Dorsolateral prefrontal cortex (tissue), 120 donors: ENCODE measurements at regions of chr16 and their contacts with region 1.

Region 1: DNA sequence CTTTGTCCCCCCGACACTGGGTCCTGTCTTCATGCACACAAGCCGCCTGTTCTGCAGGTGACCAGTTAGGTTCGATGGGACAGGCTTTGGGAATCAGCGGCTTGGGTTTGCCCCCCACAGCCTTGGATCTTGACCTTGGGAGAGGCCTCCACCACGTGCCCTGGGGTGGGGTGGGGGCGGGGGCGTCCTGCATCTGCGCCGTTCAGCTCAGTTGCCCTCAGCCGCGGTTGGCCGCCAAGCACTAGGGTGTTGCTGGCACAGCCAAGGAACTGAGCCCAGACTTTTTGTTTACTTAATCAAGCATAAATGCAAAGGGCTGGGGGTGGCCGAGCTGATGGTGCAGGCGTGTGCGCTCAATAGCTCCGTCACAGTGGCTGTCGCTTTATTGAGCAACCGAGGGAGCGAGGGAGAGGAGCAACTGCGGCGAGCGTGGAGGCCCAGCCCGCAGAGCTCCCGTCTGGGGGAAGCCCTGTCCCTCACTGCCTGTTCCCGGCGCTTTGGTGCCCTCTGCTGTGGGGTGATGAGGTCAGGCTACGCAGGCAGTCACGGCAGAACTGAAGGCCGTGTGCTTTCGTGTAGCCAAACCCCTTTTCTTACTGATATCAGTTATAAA is 33.9 kb downstream of the JPH3 start:
- DNase-seq: peak; percentile 61 to 90 (median 76)
- H3K4me3 ChIP-seq: peak overlapping the region; percentile 8 to 61 (median 42)
- H3K27ac ChIP-seq: peak overlapping the region in 11 of 59 donors; percentile 1 to 70 (median 36)
- H3K27me3 ChIP-seq: peaks cover 0 to 7% (median 0%) of the 10 kb centered on the region in 45 donors
- CTCF ChIP-seq: peak in 54 of 56 donors; percentile 32 to 80 (median 66)

Region 2: GRCh38 chr16:87416826-87417527 is 219.2 kb before region 1 on chr16:
- intact Hi-C with region 1: loop called (anchors 5 to 10 kb)
- DNase-seq: peak in 5 of 10 donors; percentile 27 to 66 (median 61)
- H3K4me3 ChIP-seq: no peak overlapping the region
- H3K27ac ChIP-seq: peak overlapping the region in 10 of 59 donors; percentile 2 to 82 (median 47)
- H3K27me3 ChIP-seq: no peaks in the 10 kb centered on the region
- CTCF ChIP-seq: peak; percentile 47 to 85 (median 73)

Region 3: GRCh38 chr16:87586201-87586782 is 49.9 kb before region 1 on chr16:
- intact Hi-C with region 1: loop called (anchors 2 to 5 kb)
- DNase-seq: no peak
- H3K4me3 ChIP-seq: no peak overlapping the region
- H3K27ac ChIP-seq: no peak overlapping the region
- H3K27me3 ChIP-seq: peaks cover 0 to 44% (median 0%) of the 10 kb centered on the region in 45 donors
- CTCF ChIP-seq: no peak